ENCODE measurements at regions of chr19 and their contacts with region 1.

Region 1: GRCh38 chr19:41363753-41364523 is at the start of gene B9D2:
- DNase-seq: peak; percentile 97

Region 2: GRCh38 chr19:41327576-41328156 is 36.3 kb before region 1 on chr19:
- CTCF ChIA-PET with region 1: no interaction called
- POLR2A ChIA-PET with region 1: no interaction called
- DNase-seq: no peak

Region 3: GRCh38 chr19:41353466-41354342 is 10.2 kb before region 1 on chr19 and contains the start of gene TGFB1:
- CTCF ChIA-PET with region 1: interaction called, 4 read pairs
- POLR2A ChIA-PET with region 1: interaction called, 51 read pairs
- DNase-seq: peak; percentile 83

Region 4: DNA sequence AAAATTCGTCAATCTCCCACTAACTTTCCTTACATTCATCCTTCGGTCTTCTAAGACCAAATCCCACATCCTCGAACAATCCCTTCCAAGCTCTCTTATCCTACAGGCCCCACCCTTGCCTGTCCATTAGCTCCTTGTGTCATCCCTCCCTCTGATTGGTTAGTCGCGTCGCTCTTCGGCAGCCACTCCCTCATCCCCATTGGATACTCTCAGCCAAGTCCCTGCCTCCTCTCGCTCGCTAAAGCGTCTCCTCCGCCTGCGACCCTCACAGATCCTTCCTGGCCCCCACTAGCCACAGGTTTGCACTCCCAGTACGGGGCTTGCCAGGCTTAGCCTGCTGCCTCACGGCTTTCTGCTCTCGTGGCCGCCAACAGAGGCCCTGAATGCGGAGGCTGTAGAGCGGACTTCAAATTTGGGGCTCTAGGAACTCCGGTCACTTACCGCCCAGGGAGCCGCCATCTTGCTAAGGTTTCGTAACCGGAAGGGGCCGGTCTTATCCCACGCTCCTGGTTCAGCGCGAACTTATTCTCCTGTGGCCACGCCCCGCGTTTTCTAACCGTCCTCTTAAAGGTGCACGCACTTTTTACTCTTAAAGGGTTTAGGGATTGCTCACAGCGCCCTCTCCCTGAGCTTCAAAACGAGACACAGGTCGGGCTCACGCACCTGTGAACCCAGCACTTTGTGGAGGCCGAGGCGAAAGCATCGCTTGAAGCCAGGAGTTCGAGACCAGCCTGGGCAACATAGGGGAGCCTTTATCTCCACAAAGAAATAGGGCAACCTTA is 75.7 kb after region 1 on chr19 and contains the start of gene DMAC2:
- CTCF ChIA-PET with region 1: interaction called, 4 read pairs
- POLR2A ChIA-PET with region 1: interaction called, 19 read pairs
- DNase-seq: peak; percentile 95

Measured in HEK293T (cell line).